ENCODE measurements at regions of chr19 and their contacts with region 1.

Region 1: GRCh38 chr19:57103573-57104277 is 16.1 kb upstream of the USP29 start:
- DNase-seq: peak; percentile 46
- H3K4me3 ChIP-seq: peak overlapping the region; percentile 11 to 25 (median 17)
- H3K27ac ChIP-seq: no peak overlapping the region
- H3K4me1 ChIP-seq: peaks cover 6% of the 10 kb centered on the region
- H3K27me3 ChIP-seq: no peaks in the 10 kb centered on the region
- CTCF ChIP-seq: peak; percentile 90 to 91

Region 2: GRCh38 chr19:57088133-57088532 is 15.6 kb before region 1 on chr19:
- CTCF ChIA-PET with region 1: no interaction called
- dilution Hi-C with region 1: no loop called
- in situ Hi-C with region 1: no loop called
- intact Hi-C with region 1: no loop called
- DNase-seq: no peak
- H3K4me3 ChIP-seq: no peak overlapping the region
- H3K27ac ChIP-seq: no peak overlapping the region
- H3K4me1 ChIP-seq: no peaks in the 10 kb centered on the region
- H3K27me3 ChIP-seq: no peaks in the 10 kb centered on the region
- CTCF ChIP-seq: no peak

Region 3: DNA sequence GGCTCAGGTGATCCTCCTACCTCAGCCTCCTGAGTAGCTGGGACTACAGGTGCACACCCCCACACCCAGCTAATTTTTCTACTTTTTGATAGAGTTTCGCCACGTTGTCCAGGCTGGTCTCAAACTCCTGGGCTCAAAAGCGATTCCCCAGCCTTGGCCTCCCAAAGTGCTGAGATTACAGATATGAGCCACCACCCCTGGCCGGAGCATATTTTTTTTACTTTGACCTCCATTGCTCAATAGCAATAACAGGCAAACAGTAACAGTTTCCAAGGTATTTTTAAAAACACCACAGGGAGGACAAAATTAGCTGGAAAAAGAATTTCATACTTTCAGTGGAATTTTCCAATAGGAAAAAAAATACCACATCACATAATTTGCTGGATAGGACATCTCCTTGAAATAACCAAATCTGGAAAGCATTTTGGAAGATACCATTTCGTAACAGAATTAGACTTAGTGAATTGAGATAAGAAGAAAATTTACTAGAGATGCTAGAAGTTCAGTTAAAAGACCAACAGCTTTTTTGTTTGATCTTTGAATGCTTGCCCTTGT is 58.3 kb after region 1 on chr19:
- CTCF ChIA-PET with region 1: no interaction called
- dilution Hi-C with region 1: no loop called
- in situ Hi-C with region 1: no loop called
- intact Hi-C with region 1: loop called (anchors 10 kb)
- DNase-seq: no peak
- H3K4me3 ChIP-seq: no peak overlapping the region
- H3K27ac ChIP-seq: no peak overlapping the region
- H3K4me1 ChIP-seq: no peaks in the 10 kb centered on the region
- H3K27me3 ChIP-seq: no peaks in the 10 kb centered on the region
- CTCF ChIP-seq: no peak

Region 4: GRCh38 chr19:57227502-57227901 is 123.8 kb after region 1 on chr19:
- CTCF ChIA-PET with region 1: no interaction called
- dilution Hi-C with region 1: no loop called
- in situ Hi-C with region 1: no loop called
- intact Hi-C with region 1: no loop called
- DNase-seq: no peak
- H3K4me3 ChIP-seq: no peak overlapping the region
- H3K27ac ChIP-seq: no peak overlapping the region
- H3K4me1 ChIP-seq: no peaks in the 10 kb centered on the region
- H3K27me3 ChIP-seq: no peaks in the 10 kb centered on the region
- CTCF ChIP-seq: no peak

Measured in mammary epithelial cell (primary cell).